Heart left ventricle (tissue), 16 donors: ENCODE measurements at regions of chr4 and their contacts with region 1.

Region 1: GRCh38 chr4:24419181-24420034 is 164.9 kb downstream of the DHX15 start:
- DNase-seq: peak; percentile 62 to 80 (median 69)
- ATAC-seq: peak; percentile 70 to 87 (median 86)
- H3K4me3 ChIP-seq: no peak overlapping the region
- H3K27ac ChIP-seq: no peak overlapping the region
- H3K4me1 ChIP-seq: peaks cover 0 to 7% (median 0%) of the 10 kb centered on the region in 12 donors
- H3K27me3 ChIP-seq: no peaks in the 10 kb centered on the region
- CTCF ChIP-seq: peak; percentile 81 to 95 (median 90)
- POLR2A ChIP-seq: no peak

Region 2: DNA sequence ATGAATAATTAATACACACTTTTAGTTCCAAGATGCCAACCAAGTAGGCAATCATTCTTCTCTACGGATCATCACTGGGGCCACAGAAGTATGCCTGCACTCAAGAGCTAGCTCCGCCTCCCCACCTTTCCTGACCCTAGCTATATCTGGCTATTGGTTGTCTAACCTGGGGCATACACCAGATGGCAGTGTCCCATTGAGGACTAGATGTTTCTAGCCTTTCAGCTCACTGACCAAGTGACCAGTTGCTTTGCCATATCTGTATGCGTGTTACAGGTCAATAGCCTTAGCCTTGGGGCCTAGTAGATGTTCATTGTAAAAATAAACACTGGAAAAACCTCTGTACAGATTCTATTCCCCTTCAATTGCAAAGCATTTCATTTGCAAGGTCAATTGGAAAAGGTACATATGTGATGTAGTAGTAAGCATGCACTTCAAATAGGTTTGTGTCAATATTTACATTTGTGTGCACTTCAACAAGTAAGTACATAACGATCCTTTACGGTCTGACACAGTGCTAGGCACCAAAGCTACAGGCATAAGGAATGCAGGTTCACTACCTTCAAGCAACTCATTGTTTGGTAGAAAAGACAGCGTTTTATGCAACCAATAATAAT is 1051.2 kb before region 1 on chr4:
- intact Hi-C with region 1: loop called in 4 of 10 experiments (anchors 2 to 10 kb)
- DNase-seq: peak in 4 of 5 donors; percentile 22 to 60 (median 43)
- ATAC-seq: peak; percentile 64 to 87 (median 85)
- H3K4me3 ChIP-seq: no peak overlapping the region
- H3K27ac ChIP-seq: peak overlapping the region in 2 of 12 donors; percentile 8 to 50
- H3K4me1 ChIP-seq: peaks cover 0 to 23% (median 2%) of the 10 kb centered on the region in 12 donors
- H3K27me3 ChIP-seq: no peaks in the 10 kb centered on the region
- CTCF ChIP-seq: peak in 11 of 12 donors; percentile 36 to 67 (median 50)
- POLR2A ChIP-seq: no peak

Region 3: DNA sequence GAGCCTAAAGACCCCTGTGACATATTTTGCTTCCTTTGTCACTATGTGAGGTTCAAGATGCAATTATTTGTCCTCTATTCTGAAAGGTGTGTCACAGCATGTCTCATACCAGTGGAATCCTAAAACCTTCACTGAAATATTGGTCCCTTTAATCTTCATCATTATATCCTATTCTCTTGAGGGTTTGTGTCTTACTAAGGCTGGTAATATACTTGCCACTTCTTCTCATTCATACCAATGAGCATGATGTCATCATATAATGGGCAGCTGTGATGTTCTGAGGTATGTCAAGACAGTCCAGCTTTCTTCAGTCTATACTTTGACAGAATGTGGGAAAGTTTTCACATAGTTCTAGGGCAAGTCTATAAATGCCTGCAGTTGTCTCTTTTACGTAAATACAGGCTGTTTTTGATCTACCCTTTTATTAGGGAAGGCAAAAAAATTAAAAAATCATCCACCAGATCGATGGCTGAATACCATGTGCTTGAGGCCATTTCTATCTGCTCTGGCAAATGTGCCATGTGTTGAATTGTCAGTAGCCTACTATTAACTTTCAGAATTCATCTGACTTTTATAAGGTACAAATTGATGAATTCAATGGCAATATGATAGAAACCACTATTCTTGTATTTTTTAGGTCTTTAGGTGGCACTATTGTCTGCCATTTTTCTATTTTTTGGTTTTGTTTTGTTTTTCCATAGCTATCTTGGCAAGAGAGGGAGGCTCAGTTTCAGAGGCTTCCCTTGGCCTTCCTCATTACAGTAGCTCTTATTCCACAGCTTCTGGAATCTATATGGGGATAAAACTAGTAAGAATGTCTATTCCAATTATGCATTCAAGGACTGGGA is 738.5 kb before region 1 on chr4:
- intact Hi-C with region 1: loop called in 2 of 10 experiments (anchors 10 kb)
- DNase-seq: no peak
- ATAC-seq: no peak
- H3K4me3 ChIP-seq: no peak overlapping the region
- H3K27ac ChIP-seq: no peak overlapping the region
- H3K4me1 ChIP-seq: no peaks in the 10 kb centered on the region
- H3K27me3 ChIP-seq: no peaks in the 10 kb centered on the region
- CTCF ChIP-seq: peak in 1 of 12 donors; percentile 28
- POLR2A ChIP-seq: no peak

Region 4: DNA sequence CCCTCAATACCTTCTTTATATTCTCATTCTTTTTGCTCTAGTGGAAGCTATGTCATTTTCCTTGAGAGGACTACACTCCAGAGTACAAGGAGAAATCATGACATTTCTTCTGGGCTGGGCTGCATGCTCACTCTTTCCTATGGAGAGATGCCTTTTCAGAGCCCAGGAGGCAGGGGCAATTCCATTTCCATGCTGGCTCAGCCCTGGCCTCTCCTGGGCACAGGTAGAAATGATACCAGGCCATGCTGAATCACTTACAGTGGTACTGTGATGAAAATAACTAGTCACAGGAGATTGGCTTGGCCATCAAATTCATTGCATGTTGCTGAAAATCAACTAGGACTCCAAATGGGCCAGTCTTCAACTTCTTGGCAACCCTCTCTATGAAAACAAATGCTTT is 495.6 kb before region 1 on chr4:
- intact Hi-C with region 1: loop called in 1 of 10 experiments (anchors 10 kb)
- DNase-seq: no peak
- ATAC-seq: peak in 3 of 4 donors; percentile 31 to 59 (median 52)
- H3K4me3 ChIP-seq: no peak overlapping the region
- H3K27ac ChIP-seq: no peak overlapping the region
- H3K4me1 ChIP-seq: peaks cover 0 to 9% (median 0%) of the 10 kb centered on the region in 12 donors
- H3K27me3 ChIP-seq: no peaks in the 10 kb centered on the region
- CTCF ChIP-seq: peak in 3 of 12 donors; percentile 13 to 23 (median 17)
- POLR2A ChIP-seq: no peak

Region 5: DNA sequence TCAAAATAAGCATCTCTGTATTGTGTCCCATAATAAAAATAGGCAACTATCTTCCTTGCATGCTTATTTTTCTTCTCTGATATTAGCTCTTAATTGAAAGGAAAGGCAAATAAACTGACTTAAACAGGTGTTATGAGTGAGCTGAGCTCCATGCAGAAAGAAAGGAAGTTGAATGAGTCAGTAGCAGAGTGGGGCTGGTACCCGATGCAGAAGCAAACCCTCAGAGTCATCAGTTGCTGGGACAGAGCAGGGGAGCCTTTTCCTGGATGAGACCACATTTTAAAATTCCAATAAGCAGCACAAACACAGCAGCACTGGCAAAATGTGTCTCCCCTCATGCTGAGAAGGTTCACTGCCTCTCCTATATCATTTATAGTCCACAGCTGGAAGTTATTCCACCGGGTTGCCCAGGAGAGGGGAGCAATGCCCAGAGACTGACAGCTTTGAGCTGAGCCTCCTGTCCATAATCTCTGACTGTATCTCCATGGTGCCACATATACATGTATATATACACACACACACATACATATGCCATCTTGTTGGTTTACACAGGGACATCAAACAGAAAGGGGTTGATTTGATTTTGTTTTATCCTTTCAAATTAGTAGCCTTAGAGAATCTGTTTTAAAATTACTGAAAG is 255.2 kb before region 1 on chr4:
- intact Hi-C with region 1: loop called in 1 of 10 experiments (anchors 10 kb)
- DNase-seq: no peak
- ATAC-seq: peak in 1 of 4 donors; percentile 24
- H3K4me3 ChIP-seq: no peak overlapping the region
- H3K27ac ChIP-seq: no peak overlapping the region
- H3K4me1 ChIP-seq: peaks cover 0 to 9% (median 0%) of the 10 kb centered on the region in 12 donors
- H3K27me3 ChIP-seq: no peaks in the 10 kb centered on the region
- CTCF ChIP-seq: no peak
- POLR2A ChIP-seq: no peak

Region 6: DNA sequence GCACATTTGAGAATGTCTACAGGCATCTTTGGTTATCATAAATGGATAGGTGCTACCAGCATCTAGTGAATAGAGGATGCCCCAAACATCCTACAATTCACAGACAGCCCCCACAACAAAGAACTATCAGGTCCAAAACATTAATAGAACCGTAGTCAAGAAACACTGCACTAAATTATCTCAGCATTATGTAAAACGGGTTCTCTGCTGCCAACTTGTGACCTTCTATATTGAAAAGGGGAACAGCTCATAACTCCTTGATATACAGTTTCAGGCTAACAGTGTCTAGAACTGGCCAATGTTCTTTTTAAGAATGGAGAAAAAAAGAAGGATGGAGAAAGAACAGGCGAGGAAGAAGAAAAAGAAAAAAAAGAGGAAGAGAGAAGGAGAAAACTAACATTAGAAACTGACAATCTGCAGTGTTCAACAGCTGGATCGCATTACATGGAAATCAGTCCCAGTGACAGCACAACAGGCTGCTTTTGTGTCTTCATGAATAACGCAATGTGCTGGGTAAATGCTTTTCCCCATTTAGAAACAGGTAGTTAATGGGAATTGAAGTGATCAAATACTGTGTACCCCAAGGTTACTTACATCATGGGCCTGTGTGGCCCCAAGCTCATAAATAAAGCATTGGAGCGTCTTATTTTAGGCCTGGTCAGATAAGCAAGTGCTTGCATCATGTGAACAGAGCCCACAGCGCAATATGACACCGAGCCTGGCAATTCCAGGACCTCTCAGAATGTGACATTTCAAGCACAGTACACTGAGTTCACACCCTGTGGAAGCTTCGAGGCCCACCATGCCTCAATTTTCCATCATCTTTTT is 174.5 kb before region 1 on chr4:
- intact Hi-C with region 1: loop called in 4 of 10 experiments (anchors 5 to 10 kb)
- DNase-seq: peak; percentile 60 to 89 (median 76)
- ATAC-seq: peak; percentile 94 to 96 (median 96)
- H3K4me3 ChIP-seq: no peak overlapping the region
- H3K27ac ChIP-seq: peak overlapping the region; percentile 56 to 94 (median 82)
- H3K4me1 ChIP-seq: peaks cover 5 to 71% (median 32%) of the 10 kb centered on the region in 12 donors
- H3K27me3 ChIP-seq: no peaks in the 10 kb centered on the region
- CTCF ChIP-seq: no peak
- POLR2A ChIP-seq: no peak

Region 7: GRCh38 chr4:24352112-24352511 is 67.3 kb before region 1 on chr4:
- intact Hi-C with region 1: no loop called
- DNase-seq: no peak
- ATAC-seq: no peak
- H3K4me3 ChIP-seq: no peak overlapping the region
- H3K27ac ChIP-seq: no peak overlapping the region
- H3K4me1 ChIP-seq: no peaks in the 10 kb centered on the region
- H3K27me3 ChIP-seq: no peaks in the 10 kb centered on the region
- CTCF ChIP-seq: no peak
- POLR2A ChIP-seq: no peak